CD8-positive, alpha-beta memory T cell (primary cell): ENCODE measurements at regions of chr6 and their contacts with region 1.

Region 1: GRCh38 chr6:127855542-127856159 is 45.2 kb downstream of the THEMIS start:
- DNase-seq: peak in 4 of 5 donors; percentile 22 to 61 (median 44)
- H3K4me3 ChIP-seq: no peak overlapping the region
- H3K4me3 Mint-ChIP-seq: peak overlapping the region in 5 of 7 donors; percentile 12 to 52 (median 30)
- H3K27ac ChIP-seq: no peak overlapping the region
- H3K27ac Mint-ChIP-seq: peak overlapping the region; percentile 44 to 89 (median 75)
- H3K4me1 ChIP-seq: peaks cover 71% of the 10 kb centered on the region
- H3K4me1 Mint-ChIP-seq: peaks cover 72 to 99% (median 95%) of the 10 kb centered on the region in 3 donors
- H3K27me3 ChIP-seq: no peaks in the 10 kb centered on the region
- H3K27me3 Mint-ChIP-seq: no peaks in the 10 kb centered on the region

Region 2: GRCh38 chr6:127762284-127762683 is 93.4 kb before region 1 on chr6:
- CTCF ChIA-PET with region 1: no interaction called
- POLR2A ChIA-PET with region 1: no interaction called
- DNase-seq: peak in 1 of 5 donors; percentile 14
- H3K4me3 ChIP-seq: no peak overlapping the region
- H3K4me3 Mint-ChIP-seq: peak overlapping the region in 1 of 7 donors; percentile 19
- H3K27ac ChIP-seq: no peak overlapping the region
- H3K27ac Mint-ChIP-seq: peak overlapping the region in 6 of 8 donors; percentile 8 to 92 (median 56)
- H3K4me1 ChIP-seq: peaks cover 35% of the 10 kb centered on the region
- H3K4me1 Mint-ChIP-seq: peaks cover 60 to 82% (median 81%) of the 10 kb centered on the region in 3 donors
- H3K27me3 ChIP-seq: no peaks in the 10 kb centered on the region
- H3K27me3 Mint-ChIP-seq: no peaks in the 10 kb centered on the region

Region 3: GRCh38 chr6:127844529-127844928 is 11.1 kb before region 1 on chr6:
- CTCF ChIA-PET with region 1: interaction called, 20 read pairs
- POLR2A ChIA-PET with region 1: no interaction called
- DNase-seq: no peak
- H3K4me3 ChIP-seq: no peak overlapping the region
- H3K4me3 Mint-ChIP-seq: no peak overlapping the region
- H3K27ac ChIP-seq: no peak overlapping the region
- H3K27ac Mint-ChIP-seq: peak overlapping the region in 2 of 8 donors; percentile 29 to 32
- H3K4me1 ChIP-seq: peaks cover 31% of the 10 kb centered on the region
- H3K4me1 Mint-ChIP-seq: peaks cover 58 to 88% (median 78%) of the 10 kb centered on the region in 3 donors
- H3K27me3 ChIP-seq: no peaks in the 10 kb centered on the region
- H3K27me3 Mint-ChIP-seq: no peaks in the 10 kb centered on the region

Region 4: GRCh38 chr6:127918506-127919427 is 63.1 kb after region 1 on chr6:
- CTCF ChIA-PET with region 1: interaction called, 12 read pairs
- POLR2A ChIA-PET with region 1: interaction called, 3 read pairs
- DNase-seq: peak in 3 of 5 donors; percentile 49 to 80 (median 62)
- H3K4me3 ChIP-seq: peak overlapping the region; percentile 61
- H3K4me3 Mint-ChIP-seq: peak overlapping the region; percentile 92 to 99 (median 96)
- H3K27ac ChIP-seq: peak overlapping the region; percentile 7
- H3K27ac Mint-ChIP-seq: peak overlapping the region; percentile 77 to 98 (median 90)
- H3K4me1 ChIP-seq: peaks cover 65% of the 10 kb centered on the region
- H3K4me1 Mint-ChIP-seq: peaks cover 80 to 84% (median 81%) of the 10 kb centered on the region in 3 donors
- H3K27me3 ChIP-seq: no peaks in the 10 kb centered on the region
- H3K27me3 Mint-ChIP-seq: no peaks in the 10 kb centered on the region

Region 5: GRCh38 chr6:127971945-127972391 is 116.3 kb after region 1 on chr6:
- CTCF ChIA-PET with region 1: interaction called, 17 read pairs
- POLR2A ChIA-PET with region 1: interaction called, 4 read pairs
- DNase-seq: peak; percentile 26 to 84 (median 77)
- H3K4me3 ChIP-seq: peak overlapping the region; percentile 61
- H3K4me3 Mint-ChIP-seq: peak overlapping the region; percentile 87 to 94 (median 90)
- H3K27ac ChIP-seq: peak overlapping the region; percentile 62
- H3K27ac Mint-ChIP-seq: peak overlapping the region; percentile 88 to 99 (median 96)
- H3K4me1 ChIP-seq: peaks cover 65% of the 10 kb centered on the region
- H3K4me1 Mint-ChIP-seq: peaks cover 67 to 92% (median 83%) of the 10 kb centered on the region in 3 donors
- H3K27me3 ChIP-seq: no peaks in the 10 kb centered on the region
- H3K27me3 Mint-ChIP-seq: peaks cover 0 to 1% of the 10 kb centered on the region in 2 donors

Region 6: GRCh38 chr6:128327890-128328289 is 472.2 kb after region 1 on chr6:
- CTCF ChIA-PET with region 1: interaction called, 21 read pairs
- POLR2A ChIA-PET with region 1: interaction called, 3 read pairs
- DNase-seq: peak in 3 of 5 donors; percentile 21 to 55 (median 29)
- H3K4me3 ChIP-seq: no peak overlapping the region
- H3K4me3 Mint-ChIP-seq: no peak overlapping the region
- H3K27ac ChIP-seq: no peak overlapping the region
- H3K27ac Mint-ChIP-seq: no peak overlapping the region
- H3K4me1 ChIP-seq: no peaks in the 10 kb centered on the region
- H3K4me1 Mint-ChIP-seq: no peaks in the 10 kb centered on the region
- H3K27me3 ChIP-seq: no peaks in the 10 kb centered on the region
- H3K27me3 Mint-ChIP-seq: peaks cover 0 to 4% of the 10 kb centered on the region in 2 donors